ENCODE measurements at regions of chr11 and their contacts with region 1.

Region 1: DNA sequence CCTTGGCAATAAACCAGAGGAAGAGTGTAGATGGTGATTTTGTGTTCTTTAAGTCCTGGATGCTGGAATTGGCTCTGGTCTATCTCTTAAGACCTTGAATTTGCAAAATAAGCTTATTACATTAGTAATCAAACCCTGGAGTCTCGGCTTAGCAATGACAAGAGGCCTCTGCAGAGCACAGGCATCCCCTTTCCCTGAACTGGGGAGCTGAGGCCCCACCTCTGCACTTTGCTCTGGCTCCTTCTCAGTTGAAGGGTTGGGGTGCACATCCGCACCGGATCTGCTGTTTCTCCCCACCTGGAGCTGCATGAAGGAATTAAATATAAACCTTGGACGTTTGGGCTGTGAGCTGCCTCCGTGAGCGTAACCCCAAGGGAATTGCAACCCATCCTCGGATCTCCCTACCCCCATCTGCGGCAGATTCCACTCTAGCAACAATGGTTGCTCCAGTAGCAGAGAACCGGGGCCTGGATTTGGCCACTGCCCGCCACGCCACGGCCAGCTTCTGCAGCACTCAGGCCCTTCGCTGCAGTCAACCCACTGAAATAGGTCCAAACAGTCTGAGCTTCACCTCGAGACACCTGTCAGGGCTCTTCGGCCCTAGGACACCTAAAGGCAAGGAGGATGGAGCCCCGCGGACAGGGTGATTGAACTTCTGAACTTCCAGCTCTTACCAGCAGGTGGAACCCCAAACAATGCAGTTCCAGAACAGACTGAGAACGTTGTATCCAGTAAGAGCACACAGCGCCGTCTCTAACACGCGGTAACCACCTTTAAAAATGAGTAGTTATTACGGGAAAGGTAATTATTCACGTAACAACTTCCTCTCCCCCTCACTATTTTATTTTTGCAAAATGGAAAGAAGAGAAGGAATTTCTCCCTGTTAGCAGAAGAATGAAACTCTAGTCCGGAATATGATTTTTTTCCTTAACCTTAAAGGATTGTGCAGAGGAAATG is 54.8 kb upstream of the CAPRIN1 start:
- DNase-seq: peak; percentile 20 to 71
- ATAC-seq: peak; percentile 86 to 97 (median 94)
- H3K4me3 ChIP-seq: no peak overlapping the region
- H3K27ac ChIP-seq: no peak overlapping the region
- H3K4me1 ChIP-seq: peaks cover 0 to 9% (median 3%) of the 10 kb centered on the region in 9 donors
- H3K27me3 ChIP-seq: peaks cover 0 to 25% (median 15%) of the 10 kb centered on the region in 7 donors
- CTCF ChIP-seq: peak; percentile 69 to 91 (median 83)

Region 2: DNA sequence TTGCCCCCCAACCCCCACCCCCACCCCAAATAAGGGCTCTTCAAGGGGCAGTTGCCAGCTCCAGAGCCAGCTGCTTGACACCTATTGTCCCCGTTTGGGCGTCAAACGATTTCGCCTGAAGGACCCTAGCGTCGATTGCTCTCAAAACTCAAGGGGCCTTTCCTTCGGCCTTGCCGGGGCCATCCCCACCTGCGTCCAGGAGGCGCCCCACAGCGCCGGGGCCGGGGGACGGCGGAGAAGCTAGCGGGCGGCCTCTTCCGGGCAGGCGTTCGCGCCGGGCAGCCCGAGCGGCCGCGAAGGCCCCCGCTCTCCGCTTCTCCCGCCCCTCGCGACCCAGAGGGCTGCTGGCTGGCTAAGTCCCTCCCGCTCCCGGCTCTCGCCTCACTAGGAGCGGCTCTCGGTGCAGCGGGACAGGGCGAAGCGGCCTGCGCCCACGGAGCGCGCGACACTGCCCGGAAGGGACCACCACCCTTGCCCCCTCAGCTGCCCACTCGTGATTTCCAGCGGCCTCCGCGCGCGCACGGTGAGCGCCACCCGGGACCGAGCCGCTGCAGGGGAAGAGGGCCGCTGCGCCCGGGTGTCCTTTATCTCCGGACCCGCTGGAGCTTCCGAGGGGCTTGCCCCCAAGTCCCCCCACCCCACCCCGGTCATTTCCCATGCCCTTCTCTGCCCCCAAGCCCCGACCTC is 54.7 kb after region 1 on chr11 and contains the start of gene CAPRIN1:
- intact Hi-C with region 1: loop called in 3 of 10 experiments (anchors 5 kb)
- DNase-seq: peak; percentile 88 to 89
- ATAC-seq: peak; percentile 89 to 96 (median 93)
- H3K4me3 ChIP-seq: peak within 1 kb of the TSS; percentile 77 to 99 (median 94)
- H3K27ac ChIP-seq: peak within 1 kb of the TSS; percentile 97 to 100 (median 100)
- H3K4me1 ChIP-seq: peaks cover 11 to 43% (median 37%) of the 10 kb centered on the region in 9 donors
- H3K27me3 ChIP-seq: no peaks in the 10 kb centered on the region
- CTCF ChIP-seq: no peak
- total RNA-seq, gene CAPRIN1: 103 to 142 (median 120) TPM

Region 3: GRCh38 chr11:34105079-34105956 is 108.5 kb after region 1 on chr11 and contains the start of gene NAT10:
- intact Hi-C with region 1: loop called in 5 of 10 experiments (anchors 5 to 10 kb)
- DNase-seq: peak; percentile 93 to 98
- ATAC-seq: peak; percentile 95 to 99 (median 98)
- H3K4me3 ChIP-seq: peak within 1 kb of the TSS; percentile 61 to 93 (median 80)
- H3K27ac ChIP-seq: peak within 1 kb of the TSS; percentile 58 to 97 (median 94)
- H3K4me1 ChIP-seq: peaks cover 0 to 27% (median 20%) of the 10 kb centered on the region in 9 donors
- H3K27me3 ChIP-seq: no peaks in the 10 kb centered on the region
- CTCF ChIP-seq: peak in 3 of 9 donors; percentile 14 to 33 (median 28)
- total RNA-seq, gene NAT10: 16.6 to 26.4 (median 22.4) TPM

Region 4: DNA sequence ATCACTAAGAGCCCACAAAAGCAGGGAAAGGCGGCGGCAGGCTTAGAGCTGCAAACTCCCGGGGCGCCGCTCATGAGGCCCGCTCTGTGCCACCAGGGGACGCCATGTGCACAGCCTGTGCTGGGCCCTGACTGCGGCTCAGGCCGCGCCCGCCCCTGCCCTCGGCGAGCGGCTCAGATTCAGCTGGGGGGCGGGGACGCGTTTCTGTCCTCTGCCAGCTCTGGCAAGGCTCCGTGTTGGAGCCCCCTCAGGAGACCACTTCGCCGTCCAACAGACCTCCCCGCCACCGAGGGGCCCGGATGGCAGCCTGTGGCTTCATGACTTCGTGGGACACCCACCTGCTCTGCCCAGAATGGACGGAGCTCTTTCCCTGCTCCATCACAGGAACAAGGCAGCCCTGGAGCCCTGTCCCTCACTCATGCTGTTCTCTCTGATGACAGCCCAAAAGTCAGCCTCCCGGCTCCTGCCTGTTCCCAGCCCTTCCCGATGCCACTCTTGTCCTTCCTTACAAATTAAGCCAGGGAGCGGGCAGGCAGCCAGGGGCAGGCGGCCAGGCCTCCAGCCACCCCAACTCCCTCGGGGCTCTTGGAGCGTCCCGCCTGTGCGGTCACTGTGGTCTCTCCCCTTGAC is 177.8 kb after region 1 on chr11:
- intact Hi-C with region 1: loop called in 6 of 10 experiments (anchors 5 to 10 kb)
- DNase-seq: peak; percentile 82 to 86
- ATAC-seq: peak; percentile 96 to 99 (median 98)
- H3K4me3 ChIP-seq: peak overlapping the region in 8 of 10 donors; percentile 21 to 39 (median 34)
- H3K27ac ChIP-seq: peak overlapping the region in 2 of 10 donors; percentile 3 to 42
- H3K4me1 ChIP-seq: peaks cover 0 to 19% (median 13%) of the 10 kb centered on the region in 9 donors
- H3K27me3 ChIP-seq: peaks cover 0 to 11% (median 0%) of the 10 kb centered on the region in 7 donors
- CTCF ChIP-seq: peak; percentile 83 to 97 (median 92)

Region 5: DNA sequence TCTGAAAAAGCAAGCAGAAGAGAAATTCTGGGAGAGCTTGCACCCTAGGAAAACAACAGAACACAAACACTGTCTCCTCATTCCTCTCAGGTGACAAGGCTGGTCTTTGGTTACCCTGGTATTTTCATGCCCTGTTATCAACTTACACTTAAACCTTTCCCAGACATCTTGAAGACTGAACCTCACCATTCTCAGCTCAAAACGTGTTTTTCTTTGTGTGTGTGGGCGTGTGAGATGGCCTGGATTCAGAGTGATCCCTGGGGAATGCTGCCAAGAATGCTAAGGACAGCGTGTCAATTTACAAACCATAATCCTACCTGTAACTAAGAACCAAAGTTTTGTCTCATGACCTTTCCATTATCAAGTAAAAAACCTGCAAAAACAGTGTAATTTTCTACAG is 483.5 kb after region 1 on chr11:
- intact Hi-C with region 1: loop called in 1 of 10 experiments (anchors 10 kb)
- DNase-seq: no peak
- ATAC-seq: no peak
- H3K4me3 ChIP-seq: no peak overlapping the region
- H3K27ac ChIP-seq: no peak overlapping the region
- H3K4me1 ChIP-seq: no peaks in the 10 kb centered on the region
- H3K27me3 ChIP-seq: no peaks in the 10 kb centered on the region
- CTCF ChIP-seq: no peak

Measured in heart right ventricle (tissue), 16 donors.